ENCODE measurements at regions of chr20 and their contacts with region 1.

Region 1: DNA sequence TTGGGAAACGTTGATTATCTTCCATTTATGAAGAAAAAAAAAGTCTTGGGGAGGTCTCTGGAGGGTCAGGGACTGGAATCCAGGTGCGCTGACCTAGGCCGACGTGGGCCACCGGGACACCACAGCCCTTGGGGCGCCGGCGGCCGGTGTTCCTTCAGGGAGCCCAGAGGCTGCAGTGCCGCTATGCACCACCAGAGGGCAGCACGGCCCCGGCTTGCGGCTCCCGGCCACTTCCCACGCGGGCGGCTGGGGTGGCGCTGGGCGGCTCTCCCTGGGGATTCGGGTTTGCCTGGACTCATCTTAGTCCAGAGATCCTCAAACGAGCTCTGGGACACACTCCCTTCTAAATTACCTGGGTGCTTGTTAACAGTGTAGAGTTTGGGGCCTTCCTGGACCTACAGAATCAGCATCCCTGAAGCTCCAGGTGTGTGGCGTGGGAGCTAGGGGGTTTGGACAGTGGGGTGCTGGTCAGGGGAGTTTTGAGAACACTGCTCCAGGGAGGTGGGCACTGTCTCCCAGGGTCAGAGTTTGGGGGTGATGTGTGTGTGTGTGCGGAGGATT is 23.0 kb upstream of the GTSF1L start:
- DNase-seq: peak; percentile 13
- ATAC-seq: peak; percentile 45
- H3K4me3 ChIP-seq: no peak overlapping the region
- H3K27ac ChIP-seq: peak overlapping the region; percentile 84
- H3K4me1 ChIP-seq: peaks cover 34% of the 10 kb centered on the region
- H3K27me3 ChIP-seq: no peaks in the 10 kb centered on the region
- CTCF ChIP-seq: peak; percentile 96 to 99 (median 98); a peak in 5 of 6 replicates
- EP300 ChIP-seq: no peak
- POLR2A ChIP-seq: no peak
- RAD21 ChIP-seq: peak; percentile 95

Region 2: DNA sequence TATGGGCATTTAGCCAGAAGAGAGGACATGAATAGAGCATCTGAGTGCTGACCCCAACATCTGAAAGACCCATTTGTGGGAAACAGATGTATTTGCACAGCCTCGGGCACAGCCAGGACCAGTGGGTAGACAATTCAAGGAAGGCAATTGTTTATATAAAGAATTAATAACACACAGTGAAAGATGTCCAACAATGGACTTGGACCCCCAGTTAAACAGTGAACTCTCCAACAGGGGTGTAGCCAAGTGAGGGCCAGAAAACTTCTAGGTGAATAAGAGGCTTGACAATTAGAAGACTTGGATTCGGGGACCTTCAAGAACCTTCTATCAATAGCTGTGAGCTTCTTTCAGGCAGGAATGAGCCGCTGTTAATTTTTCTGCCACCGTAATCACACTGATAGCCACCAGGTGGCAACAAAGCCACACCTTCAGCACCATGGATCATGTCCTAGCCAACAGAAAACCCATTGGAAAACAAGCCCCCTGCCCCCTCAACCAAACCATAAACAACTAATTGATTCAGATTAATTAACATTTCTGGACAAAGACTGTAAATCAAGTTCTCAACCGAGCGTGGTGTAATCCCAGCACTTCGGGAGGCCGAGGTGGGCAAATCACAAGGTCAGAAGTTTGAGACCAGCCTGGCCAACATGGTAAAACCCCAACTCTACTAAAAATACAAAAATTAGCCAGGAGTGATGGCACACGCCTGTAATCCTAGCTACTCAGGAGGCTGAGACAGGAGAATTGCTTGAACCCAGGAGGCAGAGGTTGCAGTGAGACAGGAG is 300.9 kb before region 1 on chr20:
- CTCF ChIA-PET with region 1: interaction called, 10 read pairs
- POLR2A ChIA-PET with region 1: no interaction called
- RAD21 ChIA-PET with region 1: interaction called, 9 read pairs
- SMC1A ChIA-PET with region 1: no interaction called
- in situ Hi-C with region 1: no loop called
- intact Hi-C with region 1: no loop called
- DNase-seq: peak; percentile 13
- ATAC-seq: peak; percentile 89
- H3K4me3 ChIP-seq: no peak overlapping the region
- H3K27ac ChIP-seq: no peak overlapping the region
- H3K4me1 ChIP-seq: no peaks in the 10 kb centered on the region
- H3K27me3 ChIP-seq: no peaks in the 10 kb centered on the region
- CTCF ChIP-seq: peak; percentile 74 to 87 (median 77)
- EP300 ChIP-seq: no peak
- POLR2A ChIP-seq: no peak
- RAD21 ChIP-seq: peak; percentile 90

Region 3: GRCh38 chr20:43736588-43737158 is 13.1 kb before region 1 on chr20:
- CTCF ChIA-PET with region 1: interaction called, 64 read pairs
- POLR2A ChIA-PET with region 1: interaction called, 12 read pairs
- RAD21 ChIA-PET with region 1: interaction called, 43 read pairs
- SMC1A ChIA-PET with region 1: interaction called, 83 read pairs
- in situ Hi-C with region 1: no loop called
- intact Hi-C with region 1: no loop called
- DNase-seq: peak; percentile 79
- ATAC-seq: peak; percentile 95
- H3K4me3 ChIP-seq: no peak overlapping the region
- H3K27ac ChIP-seq: no peak overlapping the region
- H3K4me1 ChIP-seq: peaks cover 38% of the 10 kb centered on the region
- H3K27me3 ChIP-seq: no peaks in the 10 kb centered on the region
- CTCF ChIP-seq: no peak
- EP300 ChIP-seq: peak; percentile 75 to 92
- POLR2A ChIP-seq: no peak
- RAD21 ChIP-seq: no peak

Region 4: GRCh38 chr20:43833511-43834395 is 83.9 kb after region 1 on chr20:
- CTCF ChIA-PET with region 1: interaction called, 129 read pairs
- POLR2A ChIA-PET with region 1: no interaction called
- RAD21 ChIA-PET with region 1: interaction called, 98 read pairs
- SMC1A ChIA-PET with region 1: interaction called, 3 read pairs
- in situ Hi-C with region 1: no loop called
- intact Hi-C with region 1: no loop called
- DNase-seq: no peak
- ATAC-seq: no peak
- H3K4me3 ChIP-seq: no peak overlapping the region
- H3K27ac ChIP-seq: no peak overlapping the region
- H3K4me1 ChIP-seq: peaks cover 6% of the 10 kb centered on the region
- H3K27me3 ChIP-seq: no peaks in the 10 kb centered on the region
- CTCF ChIP-seq: no peak
- EP300 ChIP-seq: no peak
- POLR2A ChIP-seq: no peak
- RAD21 ChIP-seq: no peak

Region 5: DNA sequence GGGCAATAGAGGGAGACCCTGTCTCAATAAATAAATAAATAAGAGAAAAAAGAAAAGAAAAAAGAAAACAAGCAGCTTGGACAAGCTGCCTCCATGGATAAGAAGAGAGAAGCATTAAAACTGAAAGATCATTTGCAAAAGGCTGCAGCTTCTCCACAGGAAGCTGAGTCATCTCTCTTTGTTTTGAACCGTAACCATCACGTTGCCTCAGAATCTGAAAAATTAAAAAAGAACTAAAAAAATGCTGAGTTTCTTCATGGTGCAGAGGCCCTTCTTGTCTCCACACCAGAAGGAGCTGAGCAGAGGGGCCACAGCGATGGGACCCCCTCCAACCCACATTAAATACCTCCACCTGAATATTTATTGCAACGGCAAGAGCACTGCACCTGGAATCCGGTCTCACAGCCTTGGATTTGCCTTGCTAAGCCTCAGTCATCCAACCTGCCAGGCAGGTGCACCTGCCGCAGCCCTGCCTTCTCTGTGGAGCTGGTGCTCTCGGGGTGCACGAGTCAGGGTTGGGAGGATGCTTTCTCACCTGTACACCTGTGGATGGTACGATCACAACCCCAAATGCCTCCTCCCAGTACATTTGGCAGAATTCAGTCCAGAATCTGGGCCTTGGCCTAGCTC is 193.0 kb after region 1 on chr20:
- CTCF ChIA-PET with region 1: interaction called, 37 read pairs
- POLR2A ChIA-PET with region 1: interaction called, 21 read pairs
- RAD21 ChIA-PET with region 1: interaction called, 50 read pairs
- SMC1A ChIA-PET with region 1: interaction called, 52 read pairs
- in situ Hi-C with region 1: no loop called
- intact Hi-C with region 1: no loop called
- DNase-seq: no peak
- ATAC-seq: peak; percentile 74
- H3K4me3 ChIP-seq: peak overlapping the region; percentile 50; the same call in 1 of the 2 replicates
- H3K27ac ChIP-seq: peak overlapping the region; percentile 84
- H3K4me1 ChIP-seq: peaks cover 19% of the 10 kb centered on the region
- H3K27me3 ChIP-seq: no peaks in the 10 kb centered on the region
- CTCF ChIP-seq: no peak
- EP300 ChIP-seq: peak in 1 of 2 experiments; percentile 41; a peak in 2 of 4 replicates
- POLR2A ChIP-seq: no peak
- RAD21 ChIP-seq: no peak

Region 6: DNA sequence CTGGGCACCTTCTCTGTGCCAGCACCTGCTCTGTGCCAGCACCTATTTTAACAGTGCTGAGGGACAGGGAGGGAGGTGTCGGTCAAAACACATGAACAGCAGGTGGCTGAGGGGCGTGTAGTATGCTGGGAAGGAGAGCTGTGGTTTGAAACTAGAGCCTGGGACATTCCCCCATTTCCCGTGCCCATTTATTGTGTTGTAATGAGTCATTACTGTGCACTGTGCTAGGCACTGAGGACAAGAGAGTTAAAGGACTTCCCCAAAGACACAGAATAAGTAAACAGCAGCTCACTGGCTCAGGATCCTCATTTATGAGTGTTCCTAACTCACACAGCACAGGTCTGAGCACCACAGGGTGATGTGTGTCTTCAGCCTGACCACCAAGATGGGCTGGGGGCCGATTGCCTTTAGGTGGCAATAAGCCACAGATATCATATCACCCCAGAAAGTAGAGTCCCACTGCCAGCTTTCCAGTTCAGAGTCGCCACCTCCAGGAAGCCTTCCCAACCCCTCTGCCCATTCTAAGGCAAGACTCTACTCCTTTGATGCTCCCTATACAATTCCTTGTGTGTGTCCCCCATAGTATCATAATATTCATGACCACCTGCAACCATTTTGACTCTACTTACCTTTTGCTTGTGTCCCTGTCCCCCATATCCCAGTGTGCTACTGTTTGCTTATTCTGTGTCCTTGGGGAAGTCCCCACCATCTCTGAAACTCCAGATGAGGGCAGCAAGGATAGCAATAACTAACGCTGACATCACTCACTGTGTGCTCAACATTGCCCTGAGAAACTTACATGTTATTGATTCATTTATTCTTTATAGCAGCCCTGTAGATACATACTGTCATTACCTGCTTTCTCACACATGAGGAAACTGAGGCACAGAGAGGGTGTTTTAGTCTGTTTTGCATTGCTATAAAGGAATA is 252.1 kb after region 1 on chr20:
- CTCF ChIA-PET with region 1: interaction called, 14 read pairs
- POLR2A ChIA-PET with region 1: no interaction called
- RAD21 ChIA-PET with region 1: interaction called, 28 read pairs
- SMC1A ChIA-PET with region 1: interaction called, 8 read pairs
- in situ Hi-C with region 1: no loop called
- intact Hi-C with region 1: loop called (anchors 1 kb)
- DNase-seq: peak; percentile 74
- ATAC-seq: peak; percentile 90
- H3K4me3 ChIP-seq: no peak overlapping the region
- H3K27ac ChIP-seq: no peak overlapping the region
- H3K4me1 ChIP-seq: peaks cover 16% of the 10 kb centered on the region
- H3K27me3 ChIP-seq: no peaks in the 10 kb centered on the region
- CTCF ChIP-seq: no peak
- EP300 ChIP-seq: peak in 1 of 2 experiments; percentile 6; a peak in 2 of 4 replicates
- POLR2A ChIP-seq: no peak
- RAD21 ChIP-seq: no peak

Region 7: DNA sequence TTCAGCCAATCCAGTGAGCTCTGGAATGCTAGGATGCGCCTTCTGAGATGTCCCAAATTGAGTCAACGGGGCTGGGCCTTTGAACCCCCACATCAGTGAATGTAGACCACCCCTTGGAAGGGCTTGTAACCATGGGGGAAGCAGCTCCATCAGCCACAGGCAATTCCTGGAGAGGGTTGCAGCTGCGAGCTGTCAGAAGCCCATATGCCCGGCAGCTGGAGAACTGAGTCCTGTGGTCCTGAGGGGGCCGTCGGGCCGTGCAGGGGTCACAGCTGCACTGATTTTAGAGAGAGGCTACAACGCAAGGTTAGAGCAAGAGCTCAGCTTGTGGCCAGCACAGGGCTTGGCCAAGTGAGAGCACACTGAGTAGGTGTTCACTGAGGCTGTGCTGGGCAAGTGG is 286.1 kb after region 1 on chr20:
- CTCF ChIA-PET with region 1: no interaction called
- POLR2A ChIA-PET with region 1: no interaction called
- RAD21 ChIA-PET with region 1: no interaction called
- SMC1A ChIA-PET with region 1: no interaction called
- in situ Hi-C with region 1: no loop called
- intact Hi-C with region 1: no loop called
- DNase-seq: no peak
- ATAC-seq: no peak
- H3K4me3 ChIP-seq: no peak overlapping the region
- H3K27ac ChIP-seq: no peak overlapping the region
- H3K4me1 ChIP-seq: peaks cover 5% of the 10 kb centered on the region
- H3K27me3 ChIP-seq: no peaks in the 10 kb centered on the region
- CTCF ChIP-seq: no peak
- EP300 ChIP-seq: no peak
- POLR2A ChIP-seq: no peak
- RAD21 ChIP-seq: no peak

Region 8: GRCh38 chr20:44069203-44070011 is 319.6 kb after region 1 on chr20:
- CTCF ChIA-PET with region 1: interaction called, 223 read pairs
- POLR2A ChIA-PET with region 1: no interaction called
- RAD21 ChIA-PET with region 1: interaction called, 18 read pairs
- SMC1A ChIA-PET with region 1: interaction called, 67 read pairs
- in situ Hi-C with region 1: no loop called
- intact Hi-C with region 1: loop called (anchors 1 kb)
- DNase-seq: peak; percentile 57
- ATAC-seq: peak; percentile 79
- H3K4me3 ChIP-seq: peak overlapping the region; percentile 54
- H3K27ac ChIP-seq: peak overlapping the region; percentile 32; the same call in 1 of the 2 replicates
- H3K4me1 ChIP-seq: peaks cover 18% of the 10 kb centered on the region
- H3K27me3 ChIP-seq: no peaks in the 10 kb centered on the region
- CTCF ChIP-seq: no peak
- EP300 ChIP-seq: peak; percentile 77 to 91
- POLR2A ChIP-seq: peak; percentile 31; the same call in 1 of the 2 replicates
- RAD21 ChIP-seq: no peak

Measured in GM12878 (cell line).